CD14-positive monocyte (primary cell): ENCODE measurements at regions of chr6 and their contacts with region 1.

Region 1: GRCh38 chr6:51855310-51856082 is 231.9 kb downstream of the PKHD1 start:
- DNase-seq: peak in 2 of 3 donors; percentile 21 to 30
- H3K4me3 ChIP-seq: no peak overlapping the region
- H3K4me3 Mint-ChIP-seq: no peak overlapping the region
- H3K27ac ChIP-seq: no peak overlapping the region
- H3K27ac Mint-ChIP-seq: no peak overlapping the region
- H3K4me1 ChIP-seq: no peaks in the 10 kb centered on the region
- H3K4me1 Mint-ChIP-seq: no peaks in the 10 kb centered on the region
- H3K27me3 ChIP-seq: no peaks in the 10 kb centered on the region
- H3K27me3 Mint-ChIP-seq: peaks cover 2 to 8% (median 4%) of the 10 kb centered on the region in 3 donors
- CTCF ChIP-seq: peak; percentile 75

Region 2: GRCh38 chr6:51684038-51684437 is 171.5 kb before region 1 on chr6:
- intact Hi-C with region 1: no loop called
- DNase-seq: no peak
- H3K4me3 ChIP-seq: no peak overlapping the region
- H3K4me3 Mint-ChIP-seq: no peak overlapping the region
- H3K27ac ChIP-seq: no peak overlapping the region
- H3K27ac Mint-ChIP-seq: no peak overlapping the region
- H3K4me1 ChIP-seq: no peaks in the 10 kb centered on the region
- H3K4me1 Mint-ChIP-seq: no peaks in the 10 kb centered on the region
- H3K27me3 ChIP-seq: no peaks in the 10 kb centered on the region
- H3K27me3 Mint-ChIP-seq: no peaks in the 10 kb centered on the region
- CTCF ChIP-seq: no peak

Region 3: GRCh38 chr6:52020945-52021570 is 165.6 kb after region 1 on chr6:
- intact Hi-C with region 1: loop called in 1 of 2 experiments (anchors 10 kb)
- DNase-seq: peak in 2 of 3 donors; percentile 5 to 38
- H3K4me3 ChIP-seq: no peak overlapping the region
- H3K4me3 Mint-ChIP-seq: no peak overlapping the region
- H3K27ac ChIP-seq: no peak overlapping the region
- H3K27ac Mint-ChIP-seq: no peak overlapping the region
- H3K4me1 ChIP-seq: no peaks in the 10 kb centered on the region
- H3K4me1 Mint-ChIP-seq: no peaks in the 10 kb centered on the region
- H3K27me3 ChIP-seq: no peaks in the 10 kb centered on the region
- H3K27me3 Mint-ChIP-seq: peaks cover 0 to 3% (median 2%) of the 10 kb centered on the region in 3 donors
- CTCF ChIP-seq: peak; percentile 94